MCF 10A (cell line): ENCODE measurements at regions of chr6 and their contacts with region 1.

Region 1: DNA sequence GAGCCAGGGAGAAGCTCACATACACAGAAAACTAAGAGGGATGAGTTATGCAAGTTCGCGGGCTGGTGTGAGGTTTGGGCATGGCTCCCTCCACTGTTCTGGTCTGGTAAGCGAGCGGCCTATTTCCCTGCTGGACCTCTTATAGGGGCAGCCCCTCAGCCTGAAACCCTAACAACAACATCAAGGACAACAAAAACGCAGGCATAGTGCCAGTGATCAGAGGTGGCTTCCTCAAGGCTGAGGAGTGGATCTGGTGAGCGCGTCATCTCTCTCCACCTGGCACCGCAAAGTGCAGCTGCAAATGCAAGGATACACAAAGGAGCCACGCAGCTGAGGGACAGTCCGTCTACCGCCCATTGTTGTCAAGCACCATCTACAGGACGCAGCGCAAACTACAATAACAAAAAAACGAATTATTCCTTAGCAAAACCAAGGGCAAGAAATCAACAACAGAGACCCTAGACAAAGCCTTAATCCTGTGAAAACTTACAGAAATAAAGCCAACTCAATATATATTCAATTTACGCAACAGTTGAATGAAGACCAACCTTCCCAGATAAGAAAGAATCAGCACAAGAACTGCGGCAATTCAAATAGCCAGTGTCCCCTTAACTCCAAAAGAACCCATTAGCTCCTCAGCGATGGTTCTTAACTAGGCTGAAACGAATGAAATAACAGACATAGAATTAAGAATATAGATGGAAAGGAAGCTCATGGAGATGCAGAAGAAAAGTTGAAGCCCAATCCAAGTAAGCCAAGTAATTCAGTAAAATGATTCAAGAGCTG is 9.2 kb upstream of the DEFB110 start:
- DNase-seq: peak; percentile 51
- H3K4me3 Mint-ChIP-seq: no peak overlapping the region
- H3K27ac Mint-ChIP-seq: no peak overlapping the region
- H3K4me1 Mint-ChIP-seq: no peaks in the 10 kb centered on the region
- H3K27me3 Mint-ChIP-seq: peaks cover 43% of the 10 kb centered on the region
- CTCF ChIP-seq: peak; percentile 46

Region 2: GRCh38 chr6:49856282-49856681 is 174.7 kb before region 1 on chr6:
- CTCF ChIA-PET with region 1: interaction called, 3 read pairs
- POLR2A ChIA-PET with region 1: interaction called, 3 read pairs
- intact Hi-C with region 1: loop called (anchors 10 kb)
- DNase-seq: no peak
- H3K4me3 Mint-ChIP-seq: no peak overlapping the region
- H3K27ac Mint-ChIP-seq: no peak overlapping the region
- H3K4me1 Mint-ChIP-seq: no peaks in the 10 kb centered on the region
- H3K27me3 Mint-ChIP-seq: no peaks in the 10 kb centered on the region
- CTCF ChIP-seq: no peak

Region 3: GRCh38 chr6:49923826-49924225 is 107.1 kb before region 1 on chr6:
- CTCF ChIA-PET with region 1: interaction called, 4 read pairs
- POLR2A ChIA-PET with region 1: no interaction called
- intact Hi-C with region 1: loop called (anchors 2 kb)
- DNase-seq: peak; percentile 10
- H3K4me3 Mint-ChIP-seq: no peak overlapping the region
- H3K27ac Mint-ChIP-seq: no peak overlapping the region
- H3K4me1 Mint-ChIP-seq: no peaks in the 10 kb centered on the region
- H3K27me3 Mint-ChIP-seq: no peaks in the 10 kb centered on the region
- CTCF ChIP-seq: no peak

Region 4: GRCh38 chr6:50003139-50003538 is 27.8 kb before region 1 on chr6:
- CTCF ChIA-PET with region 1: no interaction called
- POLR2A ChIA-PET with region 1: no interaction called
- intact Hi-C with region 1: no loop called
- DNase-seq: no peak
- H3K4me3 Mint-ChIP-seq: no peak overlapping the region
- H3K27ac Mint-ChIP-seq: no peak overlapping the region
- H3K4me1 Mint-ChIP-seq: peaks cover 7% of the 10 kb centered on the region
- H3K27me3 Mint-ChIP-seq: peaks cover 12% of the 10 kb centered on the region
- CTCF ChIP-seq: no peak

Region 5: DNA sequence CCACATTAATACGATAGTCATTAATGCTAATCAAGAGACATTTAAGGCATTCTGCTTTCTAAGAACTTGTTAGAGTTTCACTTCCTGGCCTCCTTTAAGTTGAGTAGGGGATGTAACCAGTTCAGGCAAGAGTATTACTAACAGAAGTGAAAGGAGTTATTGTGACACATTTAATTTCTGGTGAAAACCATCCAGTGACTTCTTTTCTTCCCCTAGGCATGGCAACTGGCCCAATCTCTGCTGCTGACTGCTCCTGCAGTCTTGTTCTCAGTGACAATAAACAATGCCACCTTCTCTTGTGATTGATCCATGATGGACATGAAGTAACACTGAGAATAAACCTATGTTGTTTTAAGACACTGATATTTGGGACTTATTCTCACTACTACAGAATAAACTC is 149.7 kb after region 1 on chr6:
- CTCF ChIA-PET with region 1: no interaction called
- POLR2A ChIA-PET with region 1: no interaction called
- intact Hi-C with region 1: no loop called
- DNase-seq: no peak
- H3K4me3 Mint-ChIP-seq: no peak overlapping the region
- H3K27ac Mint-ChIP-seq: no peak overlapping the region
- H3K4me1 Mint-ChIP-seq: no peaks in the 10 kb centered on the region
- H3K27me3 Mint-ChIP-seq: peaks cover 27% of the 10 kb centered on the region
- CTCF ChIP-seq: no peak